ENCODE measurements at regions of chr16 and their contacts with region 1.

Region 1: GRCh38 chr16:77905459-77905858 is 116.9 kb upstream of the CLEC3A start:
- DNase-seq: no peak
- ATAC-seq: no peak

Region 2: DNA sequence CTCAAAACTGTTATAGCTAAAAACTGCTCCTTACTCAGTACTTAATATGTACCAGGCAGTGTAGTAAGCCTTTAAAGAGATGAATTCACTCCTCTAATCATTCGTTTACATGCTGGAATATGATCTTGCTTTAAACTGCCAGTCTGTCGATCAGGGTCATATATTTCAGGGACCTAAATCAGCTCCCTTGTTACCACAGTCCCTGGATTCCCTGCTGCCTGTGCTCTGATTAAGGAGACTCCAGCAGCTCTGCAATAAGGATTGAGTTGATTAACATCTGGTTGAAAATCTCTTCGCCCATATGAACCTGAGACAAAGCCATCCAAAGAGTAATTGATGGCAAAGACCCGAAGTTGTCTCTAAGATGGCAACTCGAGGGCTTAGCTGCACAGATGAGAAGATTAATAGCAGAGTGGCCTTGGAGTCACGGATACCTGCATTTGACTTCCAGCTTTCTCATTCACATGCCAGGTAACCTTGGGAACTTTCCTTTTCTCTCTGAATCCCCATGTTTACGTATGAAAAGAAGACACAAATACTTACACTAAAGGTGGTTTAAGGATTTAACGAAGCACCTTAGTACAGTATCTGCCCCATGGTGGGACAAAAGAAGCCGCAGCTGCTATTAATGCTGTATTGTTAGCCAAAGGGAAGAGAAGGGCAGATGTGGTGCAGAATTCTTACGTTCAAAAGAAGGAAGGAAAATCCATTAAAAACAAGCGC is 48.9 kb before region 1 on chr16:
- intact Hi-C with region 1: no loop called
- DNase-seq: no peak
- ATAC-seq: no peak

Region 3: DNA sequence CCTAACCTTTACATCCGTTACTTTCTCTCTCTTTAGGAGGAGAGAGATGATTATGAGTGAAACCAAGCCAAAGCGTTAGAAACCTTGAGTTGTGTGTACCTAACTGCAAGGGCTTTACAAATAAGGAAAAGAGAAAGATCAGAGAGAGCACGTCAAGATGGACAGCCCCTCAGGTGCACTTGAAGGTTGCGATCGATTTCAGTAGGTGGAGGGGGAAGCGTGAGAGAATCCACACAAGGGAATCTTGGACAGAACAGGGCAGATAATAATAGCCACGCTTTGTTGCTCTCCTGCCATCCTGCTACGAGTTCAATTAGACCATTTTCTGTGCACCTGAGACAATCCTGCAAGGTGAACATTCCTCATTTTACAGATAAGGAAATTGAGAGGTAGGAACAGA is 38.7 kb before region 1 on chr16:
- intact Hi-C with region 1: loop called (anchors 1 kb)
- DNase-seq: no peak
- ATAC-seq: no peak

Measured in sciatic nerve (tissue), 2 donors.